ENCODE measurements at regions of chr18 and their contacts with region 1.

Region 1: DNA sequence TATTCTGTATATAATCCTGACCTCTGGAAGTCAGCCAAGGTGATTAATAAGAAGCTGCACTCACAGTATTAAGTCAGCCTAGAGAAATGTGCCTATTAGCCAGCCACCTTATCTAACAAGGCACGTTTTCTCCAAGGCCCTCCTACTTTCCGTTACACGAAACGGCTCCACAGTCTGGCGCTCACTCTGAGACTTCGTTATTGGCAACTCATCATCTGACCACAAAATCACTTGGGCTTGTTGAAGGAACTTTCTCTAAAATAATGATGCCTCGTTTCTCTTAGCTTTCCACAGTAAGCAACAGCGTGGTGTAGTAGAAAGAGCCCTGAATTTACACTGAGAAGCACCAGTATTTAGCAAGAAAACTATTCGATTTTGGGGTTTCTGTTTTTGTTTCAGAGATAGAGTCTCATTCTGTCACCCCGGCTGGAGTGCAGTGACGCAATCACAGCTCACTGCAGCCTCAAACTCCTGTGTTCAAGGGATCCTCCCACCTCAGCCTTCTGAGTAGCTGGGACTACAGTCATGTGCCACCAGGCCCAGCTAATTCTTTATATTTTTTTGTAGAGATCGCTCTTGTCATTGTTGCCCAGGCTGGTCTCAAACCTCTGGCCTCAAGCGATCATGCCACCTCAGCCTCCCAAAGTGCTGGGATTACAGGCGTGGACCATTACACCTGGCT is 53.6 kb upstream of the SLC14A1 start:
- DNase-seq: no peak
- CTCF ChIP-seq: no peak

Region 2: DNA sequence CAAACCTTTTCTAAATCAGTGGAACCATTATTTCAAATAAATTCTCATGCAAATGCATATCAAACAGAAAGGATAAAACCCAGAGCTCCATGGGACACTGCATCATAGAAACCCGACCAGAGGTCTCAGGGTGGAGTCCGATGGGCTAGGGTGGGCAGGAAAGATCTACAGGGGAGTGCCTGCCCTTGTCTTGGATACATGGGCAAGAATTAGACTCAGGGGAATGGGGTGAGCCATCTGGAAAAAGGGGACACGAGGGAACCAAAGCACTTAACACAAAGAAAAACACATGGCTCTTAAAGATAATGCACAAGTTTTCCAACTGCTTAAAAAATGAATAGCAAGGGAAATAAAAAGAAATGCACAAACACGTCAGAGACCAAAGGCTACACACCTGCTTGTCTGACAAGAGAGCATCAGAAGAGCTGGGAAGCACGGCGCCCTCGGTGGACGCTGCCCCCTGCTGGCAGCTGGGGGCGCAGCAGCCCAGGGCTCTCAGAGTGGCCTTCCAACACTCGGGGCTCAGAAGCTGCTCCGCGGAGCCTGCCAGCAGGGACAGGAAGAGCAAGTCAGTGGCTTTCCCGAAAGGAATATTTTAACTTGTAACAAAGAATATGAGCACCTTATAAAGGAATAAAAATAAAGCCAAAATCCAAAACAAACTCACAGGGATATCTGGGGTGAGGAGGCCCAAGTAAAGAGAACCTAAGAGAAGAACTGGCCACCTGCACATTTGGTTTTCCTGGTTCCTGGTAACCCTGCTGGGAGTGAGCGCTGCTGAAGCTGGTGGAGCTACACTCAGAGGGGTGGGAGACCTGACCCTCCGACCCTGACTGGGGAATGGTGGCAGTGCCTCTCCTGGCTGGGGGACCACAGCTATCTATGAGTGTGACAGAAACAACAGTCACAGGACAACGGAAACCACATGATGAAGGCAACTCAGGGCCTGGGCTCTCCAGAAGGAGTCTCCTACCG is 209.5 kb after region 1 on chr18:
- in situ Hi-C with region 1: loop called (anchors 10 kb)
- DNase-seq: peak; percentile 78
- CTCF ChIP-seq: peak; percentile 100

Region 3: GRCh38 chr18:46080156-46080555 is 409.7 kb after region 1 on chr18:
- in situ Hi-C with region 1: loop called (anchors 10 kb)
- DNase-seq: no peak
- CTCF ChIP-seq: no peak

Measured in GM13977 (cell line).